OCI-LY7 (cell line): ENCODE measurements at regions of chr2 and their contacts with region 1.

Region 1: GRCh38 chr2:120680136-120680761 is 55.4 kb upstream of the GLI2 start:
- DNase-seq: peak; percentile 82
- H3K4me3 ChIP-seq: no peak overlapping the region
- H3K27ac ChIP-seq: no peak overlapping the region
- H3K4me1 ChIP-seq: no peaks in the 10 kb centered on the region
- CTCF ChIP-seq: peak; percentile 85

Region 2: GRCh38 chr2:120206022-120206581 is 474.1 kb before region 1 on chr2:
- CTCF ChIA-PET with region 1: no interaction called
- POLR2A ChIA-PET with region 1: interaction called, 6 read pairs
- intact Hi-C with region 1: loop called (anchors 10 kb)
- DNase-seq: peak; percentile 48
- H3K4me3 ChIP-seq: no peak overlapping the region
- H3K27ac ChIP-seq: no peak overlapping the region
- H3K4me1 ChIP-seq: no peaks in the 10 kb centered on the region
- CTCF ChIP-seq: peak; percentile 79

Region 3: DNA sequence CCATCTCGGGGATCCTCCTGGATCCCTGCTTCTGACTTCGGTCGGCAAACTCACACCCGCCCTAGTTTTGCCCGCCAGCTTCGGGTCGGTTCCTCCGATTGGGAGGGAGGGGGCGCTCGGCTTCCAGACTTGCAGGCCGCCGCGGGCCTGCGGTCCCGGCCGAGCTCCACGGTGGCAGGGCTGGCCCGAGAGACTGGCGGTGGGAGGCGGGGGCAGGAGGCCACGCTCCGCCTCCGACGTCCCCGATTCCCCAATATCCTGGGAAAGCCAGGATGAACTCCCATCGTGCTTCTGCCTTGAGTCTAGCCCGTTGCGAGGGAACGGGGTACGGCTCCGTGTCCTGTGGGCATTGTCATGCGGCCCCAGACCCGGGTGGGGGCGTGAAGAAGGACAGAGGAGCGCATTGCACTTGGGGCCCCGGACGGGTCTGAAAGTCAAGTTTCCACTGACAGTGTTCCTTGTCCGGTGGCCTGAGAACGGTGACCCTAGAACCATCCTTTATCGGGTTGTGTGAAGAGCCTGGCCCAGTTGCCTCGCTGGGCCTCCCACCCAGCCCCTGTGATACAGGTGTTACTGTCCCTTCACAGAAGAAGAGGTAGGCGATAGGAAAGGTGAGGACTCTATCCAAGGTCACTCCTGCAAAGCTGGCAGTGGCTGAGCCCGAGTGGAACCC is 336.7 kb before region 1 on chr2:
- CTCF ChIA-PET with region 1: no interaction called
- POLR2A ChIA-PET with region 1: no interaction called
- intact Hi-C with region 1: loop called (anchors 5 kb)
- DNase-seq: peak; percentile 5
- H3K4me3 ChIP-seq: no peak overlapping the region
- H3K27ac ChIP-seq: no peak overlapping the region
- H3K4me1 ChIP-seq: no peaks in the 10 kb centered on the region
- CTCF ChIP-seq: peak; percentile 62

Region 4: GRCh38 chr2:120559401-120559800 is 120.8 kb before region 1 on chr2:
- CTCF ChIA-PET with region 1: no interaction called
- POLR2A ChIA-PET with region 1: no interaction called
- intact Hi-C with region 1: no loop called
- DNase-seq: no peak
- H3K4me3 ChIP-seq: no peak overlapping the region
- H3K27ac ChIP-seq: no peak overlapping the region
- H3K4me1 ChIP-seq: no peaks in the 10 kb centered on the region
- CTCF ChIP-seq: no peak

Region 5: DNA sequence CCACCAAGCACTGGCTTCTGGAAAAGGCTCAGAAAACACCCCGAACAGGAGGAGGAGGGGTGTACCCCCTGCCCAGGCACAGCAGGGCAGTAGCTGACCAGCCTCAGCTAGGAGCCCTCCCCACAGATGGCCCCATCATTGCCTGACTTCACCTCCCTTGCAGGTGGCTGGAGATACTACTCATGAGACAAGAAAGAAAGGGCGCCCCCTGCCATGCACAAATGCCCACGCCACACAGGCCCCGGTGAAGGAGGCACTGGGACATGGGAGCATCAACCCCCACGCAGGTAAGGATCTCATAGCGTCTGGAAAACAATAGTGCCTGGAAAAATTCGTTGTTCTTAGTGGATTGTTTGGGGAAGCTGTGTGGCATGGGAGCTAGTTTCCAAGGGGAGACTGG is 364.2 kb after region 1 on chr2:
- CTCF ChIA-PET with region 1: no interaction called
- POLR2A ChIA-PET with region 1: no interaction called
- intact Hi-C with region 1: no loop called
- DNase-seq: no peak
- H3K4me3 ChIP-seq: no peak overlapping the region
- H3K27ac ChIP-seq: no peak overlapping the region
- H3K4me1 ChIP-seq: no peaks in the 10 kb centered on the region
- CTCF ChIP-seq: peak; percentile 50; the same call in 1 of the 2 replicates